ENCODE measurements at regions of chr7 and their contacts with region 1.

Region 1: GRCh38 chr7:155344600-155345433 is 47.1 kb downstream of the INSIG1 start:
- DNase-seq: peak; percentile 80
- H3K4me3 ChIP-seq: peak overlapping the region; percentile 65
- H3K27ac ChIP-seq: no peak overlapping the region
- H3K4me1 ChIP-seq: no peaks in the 10 kb centered on the region
- H3K27me3 ChIP-seq: 0 out of 2 replicates have a peak, but pooled peaks cover 9% of the 10 kb centered on the region

Region 2: DNA sequence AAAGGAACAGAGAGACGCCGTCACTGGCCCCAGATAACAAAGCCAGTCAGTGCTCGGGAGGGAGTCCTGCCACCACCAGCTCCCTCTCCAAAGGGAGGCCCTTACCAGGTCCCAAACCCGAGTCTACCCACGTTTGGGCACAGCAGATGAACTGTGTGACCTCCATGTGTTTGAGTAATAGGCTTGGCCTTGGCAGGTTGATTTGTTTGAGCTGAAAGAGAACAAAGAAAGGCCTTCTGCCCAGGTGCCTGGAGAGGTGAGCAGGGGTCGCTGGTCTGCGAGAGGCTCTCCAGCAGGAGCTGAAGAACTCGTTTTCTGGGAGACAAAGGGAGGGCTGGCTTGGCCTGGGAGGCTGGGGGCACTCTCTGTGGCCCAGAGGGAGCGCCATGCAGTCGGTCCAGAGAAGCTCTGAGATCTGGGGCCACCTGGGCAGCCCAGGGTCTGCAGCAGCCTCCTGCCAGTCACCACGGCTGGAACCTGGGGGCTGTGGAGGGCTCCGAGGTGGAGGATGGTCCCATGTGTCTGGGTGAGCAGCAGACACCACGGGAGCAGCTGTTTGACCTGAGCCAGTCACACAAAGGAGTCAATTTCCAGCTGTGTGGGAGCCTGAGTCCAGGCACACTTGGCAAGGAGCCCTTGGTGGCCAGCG is 441.6 kb before region 1 on chr7:
- in situ Hi-C with region 1: loop called (anchors 10 kb)
- DNase-seq: no peak
- H3K4me3 ChIP-seq: no peak overlapping the region
- H3K27ac ChIP-seq: no peak overlapping the region
- H3K4me1 ChIP-seq: no peaks in the 10 kb centered on the region
- H3K27me3 ChIP-seq: no peaks in the 10 kb centered on the region

Region 3: GRCh38 chr7:155188821-155189581 is 155.8 kb before region 1 on chr7:
- in situ Hi-C with region 1: loop called (anchors 5 kb)
- DNase-seq: peak; percentile 50
- H3K4me3 ChIP-seq: no peak overlapping the region
- H3K27ac ChIP-seq: no peak overlapping the region
- H3K4me1 ChIP-seq: peaks cover 18% of the 10 kb centered on the region; the same call in 1 of the 2 replicates
- H3K27me3 ChIP-seq: no peaks in the 10 kb centered on the region